Activated CD4-positive, alpha-beta memory T cell treated with anti-CD3 and anti-CD28 coated beads for 36 hours (primary cell): ENCODE measurements at regions of chr1 and their contacts with region 1.

Region 1: DNA sequence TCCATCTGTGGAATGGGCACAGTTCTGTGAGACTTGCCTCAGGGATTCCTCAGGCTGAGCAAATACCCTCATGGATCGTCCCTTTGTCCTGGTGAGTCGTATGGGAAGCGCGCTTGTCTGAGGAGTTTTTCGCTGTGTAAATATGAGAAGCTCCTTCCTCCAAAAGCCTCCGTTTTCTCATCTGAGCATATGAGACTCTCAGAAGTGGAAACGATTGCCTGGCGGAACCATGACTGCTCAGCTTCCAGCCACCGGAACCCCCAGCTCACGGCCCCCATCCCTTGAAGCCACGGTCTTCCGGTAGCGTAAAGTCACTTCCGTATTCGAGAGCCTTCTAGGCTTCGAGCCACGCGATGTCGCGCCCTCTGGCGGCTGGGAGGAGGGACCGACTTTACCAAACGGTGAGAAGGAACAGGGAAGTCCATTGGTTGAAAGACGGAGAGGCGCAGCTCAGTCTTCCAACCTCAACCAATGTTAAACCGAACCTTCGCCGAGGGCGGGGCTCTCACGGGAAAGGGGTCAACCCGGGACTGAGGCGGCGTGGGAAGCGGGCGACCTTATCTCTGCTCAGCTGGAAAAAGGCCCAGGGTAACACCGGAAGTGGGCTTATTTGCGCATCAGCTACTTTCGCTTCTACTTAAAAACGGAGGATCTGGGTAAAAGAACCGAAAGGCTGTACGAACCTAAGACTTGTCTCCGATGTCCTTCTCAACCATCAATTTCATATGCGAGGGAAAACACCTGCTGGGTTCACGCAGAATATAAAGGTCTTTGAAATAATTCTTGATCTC is 46.2 kb downstream of the AZIN2 start:
- DNase-seq: peak; percentile 100
- H3K4me3 Mint-ChIP-seq: peak overlapping the region; percentile 93
- H3K27ac Mint-ChIP-seq: peak overlapping the region; percentile 97
- H3K4me1 Mint-ChIP-seq: peaks cover 41% of the 10 kb centered on the region
- H3K27me3 Mint-ChIP-seq: no peaks in the 10 kb centered on the region

Region 2: DNA sequence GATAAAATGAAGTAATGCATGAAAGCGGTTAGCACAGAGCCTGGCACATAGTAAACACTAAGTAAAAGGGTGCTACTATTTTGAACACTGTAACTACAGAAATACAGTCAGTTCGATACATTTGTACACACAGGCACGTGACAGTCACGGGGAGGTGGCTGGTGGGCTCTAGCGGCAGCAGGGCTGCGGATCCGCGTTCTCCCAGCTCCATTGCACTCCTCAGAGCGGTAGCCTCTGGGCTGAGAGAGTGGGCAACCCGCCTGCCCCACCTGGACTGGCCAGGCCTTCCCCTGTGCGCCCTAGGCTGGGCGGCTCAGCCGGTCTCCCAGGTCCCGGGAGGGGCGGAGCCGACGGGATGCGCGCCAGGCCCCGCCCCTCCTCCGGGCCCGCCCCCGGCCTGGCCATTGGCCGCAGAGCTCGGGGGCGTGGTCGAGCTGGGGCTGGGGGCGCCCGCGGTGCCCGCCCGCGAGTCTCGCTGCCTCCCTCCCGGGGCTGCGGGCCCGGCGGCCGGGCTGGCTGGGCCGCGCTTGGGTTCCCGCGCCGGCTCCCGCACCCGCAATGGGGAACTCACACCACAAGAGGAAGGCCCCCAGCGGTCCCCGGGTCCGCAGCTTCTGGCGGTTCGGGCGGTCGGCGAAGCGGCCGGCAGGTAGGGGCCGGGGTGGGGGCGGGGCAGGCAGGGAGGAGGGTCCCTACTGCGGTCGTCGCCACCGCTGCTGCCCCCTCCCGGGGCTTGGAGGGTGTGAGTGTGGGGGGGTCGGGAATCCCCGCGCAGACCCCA is 373.5 kb before region 1 on chr1:
- CTCF ChIA-PET with region 1: no interaction called
- POLR2A ChIA-PET with region 1: no interaction called
- intact Hi-C with region 1: no loop called
- DNase-seq: peak; percentile 65
- H3K4me3 Mint-ChIP-seq: peak overlapping the region; percentile 47
- H3K27ac Mint-ChIP-seq: no peak overlapping the region
- H3K4me1 Mint-ChIP-seq: peaks cover 6% of the 10 kb centered on the region
- H3K27me3 Mint-ChIP-seq: peaks cover 4% of the 10 kb centered on the region

Region 3: DNA sequence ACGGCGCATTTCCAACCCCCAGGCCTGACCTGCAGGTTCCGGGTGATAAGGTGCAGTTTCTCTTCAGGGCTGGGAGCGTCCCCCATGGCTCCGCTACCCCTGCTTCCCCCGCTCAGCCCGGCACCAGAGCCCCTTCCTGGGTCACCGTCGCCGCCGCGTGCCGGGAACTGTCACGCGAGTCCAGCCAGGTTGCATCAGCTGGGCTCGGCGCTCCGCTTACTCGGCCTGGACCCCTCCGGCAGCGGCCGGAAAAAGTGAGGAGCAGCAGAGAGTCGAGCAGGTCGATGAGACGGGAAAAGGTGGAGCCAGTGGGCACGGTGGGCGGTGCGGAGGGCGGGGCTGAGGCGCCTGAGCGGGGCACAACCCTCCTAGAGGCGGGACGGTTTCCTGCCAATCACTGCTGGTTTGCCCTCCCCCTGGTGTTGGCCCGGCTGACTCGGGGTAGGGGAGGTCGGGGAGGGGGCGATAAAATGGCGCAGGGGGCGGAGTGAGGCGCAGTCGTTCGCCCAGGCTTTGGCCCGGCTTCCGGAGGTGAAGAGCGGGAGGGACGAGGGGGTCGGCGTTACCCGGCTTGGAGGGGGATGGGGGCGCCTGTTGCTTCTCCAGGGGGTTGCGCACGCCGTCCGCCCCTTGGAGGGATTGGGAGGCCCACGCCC is 309.9 kb before region 1 on chr1 and contains the starts of genes S100PBP and YARS1:
- CTCF ChIA-PET with region 1: no interaction called
- POLR2A ChIA-PET with region 1: no interaction called
- intact Hi-C with region 1: loop called (anchors 1 kb)
- DNase-seq: peak; percentile 100
- H3K4me3 Mint-ChIP-seq: peak within 1 kb of the TSS; percentile 99
- H3K27ac Mint-ChIP-seq: peak within 1 kb of the TSS; percentile 94
- H3K4me1 Mint-ChIP-seq: peaks cover 50% of the 10 kb centered on the region
- H3K27me3 Mint-ChIP-seq: no peaks in the 10 kb centered on the region
- total RNA-seq, gene S100PBP: 30.4 to 32.7 TPM
- total RNA-seq, gene YARS1: 208 to 213 TPM

Region 4: GRCh38 chr1:33094971-33095604 is 32.1 kb before region 1 on chr1:
- CTCF ChIA-PET with region 1: interaction called, 25 read pairs
- POLR2A ChIA-PET with region 1: interaction called, 14 read pairs
- intact Hi-C with region 1: loop called (anchors 1 kb)
- DNase-seq: peak; percentile 28
- H3K4me3 Mint-ChIP-seq: no peak overlapping the region
- H3K27ac Mint-ChIP-seq: no peak overlapping the region
- H3K4me1 Mint-ChIP-seq: peaks cover 28% of the 10 kb centered on the region
- H3K27me3 Mint-ChIP-seq: no peaks in the 10 kb centered on the region

Region 5: DNA sequence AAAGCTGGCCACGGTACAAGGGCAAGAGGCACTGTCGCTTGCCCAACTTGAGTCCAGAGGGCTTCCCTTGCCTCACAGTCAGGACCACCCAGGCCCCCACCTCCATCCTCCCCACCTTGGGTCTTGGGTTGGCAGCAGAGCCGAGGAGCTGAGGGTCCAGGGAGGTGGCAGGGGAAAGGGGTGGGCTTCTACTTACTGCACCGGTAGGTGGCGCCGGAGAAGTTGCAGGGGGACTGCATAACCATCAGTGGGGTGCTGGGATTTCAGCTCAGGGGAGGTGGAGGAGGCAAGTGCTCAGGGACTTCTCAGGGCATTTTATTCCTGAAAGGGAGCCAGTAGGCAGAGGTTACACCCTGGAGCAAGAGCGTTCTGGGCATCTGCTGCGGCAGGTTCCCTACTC is 10.6 kb after region 1 on chr1:
- CTCF ChIA-PET with region 1: interaction called, 12 read pairs
- POLR2A ChIA-PET with region 1: interaction called, 5 read pairs
- intact Hi-C with region 1: no loop called
- DNase-seq: peak; percentile 36
- H3K4me3 Mint-ChIP-seq: no peak overlapping the region
- H3K27ac Mint-ChIP-seq: no peak overlapping the region
- H3K4me1 Mint-ChIP-seq: peaks cover 4% of the 10 kb centered on the region
- H3K27me3 Mint-ChIP-seq: no peaks in the 10 kb centered on the region

Region 6: DNA sequence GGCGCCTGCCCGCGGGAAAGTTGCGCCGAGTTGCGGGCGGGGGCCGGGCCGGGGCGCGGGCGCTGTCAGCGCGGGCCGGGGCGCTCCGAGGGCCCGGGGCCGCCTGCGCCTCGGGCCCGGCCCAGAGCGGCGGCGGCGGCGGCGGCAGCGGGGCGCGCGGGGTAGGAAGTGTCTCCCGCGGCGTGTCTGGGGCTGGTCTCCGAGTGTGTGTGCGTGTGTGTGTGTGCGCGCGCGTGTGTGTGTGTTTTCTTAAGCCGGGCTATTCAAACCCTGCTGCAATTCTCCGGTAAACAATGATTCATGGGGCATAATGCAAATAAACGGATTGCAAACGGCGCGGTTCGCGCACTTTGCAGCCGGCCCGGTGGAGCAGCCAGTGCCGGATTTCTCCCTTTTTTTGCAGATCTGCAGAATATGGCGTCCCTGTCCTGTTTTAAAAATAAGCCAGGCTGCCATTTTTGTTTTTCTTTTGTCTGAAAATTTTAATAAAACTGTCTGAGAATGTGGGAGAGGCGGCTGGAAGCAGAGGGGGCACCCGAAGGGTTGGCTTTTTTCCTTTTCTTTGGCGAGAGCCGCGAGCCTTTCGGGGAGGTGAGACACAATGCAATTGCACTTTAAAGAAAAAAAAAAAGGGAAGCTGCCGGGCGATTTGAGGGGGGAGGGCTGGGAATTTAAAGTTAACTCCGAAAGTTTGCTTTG is 129.7 kb after region 1 on chr1:
- CTCF ChIA-PET with region 1: interaction called, 3 read pairs
- POLR2A ChIA-PET with region 1: interaction called, 3 read pairs
- intact Hi-C with region 1: loop called (anchors 2 kb)
- DNase-seq: peak; percentile 70
- H3K4me3 Mint-ChIP-seq: peak overlapping the region; percentile 98
- H3K27ac Mint-ChIP-seq: peak overlapping the region; percentile 96
- H3K4me1 Mint-ChIP-seq: peaks cover 38% of the 10 kb centered on the region
- H3K27me3 Mint-ChIP-seq: no peaks in the 10 kb centered on the region

Region 7: GRCh38 chr1:33349778-33350610 is 222.8 kb after region 1 on chr1:
- CTCF ChIA-PET with region 1: interaction called, 3 read pairs
- POLR2A ChIA-PET with region 1: no interaction called
- intact Hi-C with region 1: loop called (anchors 5 kb)
- DNase-seq: peak; percentile 84
- H3K4me3 Mint-ChIP-seq: peak overlapping the region; percentile 91
- H3K27ac Mint-ChIP-seq: peak overlapping the region; percentile 94
- H3K4me1 Mint-ChIP-seq: peaks cover 46% of the 10 kb centered on the region
- H3K27me3 Mint-ChIP-seq: no peaks in the 10 kb centered on the region